Esophagus muscularis mucosa (tissue), 4 donors: ENCODE measurements at regions of chr16 and their contacts with region 1.

Region 1: GRCh38 chr16:46607529-46607928 is 13.7 kb downstream of the SHCBP1 start:
- DNase-seq: no peak
- H3K4me3 ChIP-seq: no peak overlapping the region
- H3K27ac ChIP-seq: no peak overlapping the region
- H3K4me1 ChIP-seq: no peaks in the 10 kb centered on the region
- H3K27me3 ChIP-seq: no peaks in the 10 kb centered on the region
- CTCF ChIP-seq: peak; percentile 33 to 46 (median 46)
- EP300 ChIP-seq: no peak
- POLR2A ChIP-seq: no peak

Region 2: GRCh38 chr16:46555951-46556350 is 51.6 kb before region 1 on chr16:
- intact Hi-C with region 1: loop called (anchors 2 kb)
- DNase-seq: no peak
- H3K4me3 ChIP-seq: no peak overlapping the region
- H3K27ac ChIP-seq: no peak overlapping the region
- H3K4me1 ChIP-seq: peaks cover 0 to 5% (median 1%) of the 10 kb centered on the region in 4 donors
- H3K27me3 ChIP-seq: no peaks in the 10 kb centered on the region
- CTCF ChIP-seq: no peak
- EP300 ChIP-seq: no peak
- POLR2A ChIP-seq: no peak

Region 3: GRCh38 chr16:46583036-46583435 is 24.5 kb before region 1 on chr16:
- intact Hi-C with region 1: no loop called
- DNase-seq: no peak
- H3K4me3 ChIP-seq: no peak overlapping the region
- H3K27ac ChIP-seq: no peak overlapping the region
- H3K4me1 ChIP-seq: no peaks in the 10 kb centered on the region
- H3K27me3 ChIP-seq: no peaks in the 10 kb centered on the region
- CTCF ChIP-seq: no peak
- EP300 ChIP-seq: no peak
- POLR2A ChIP-seq: no peak